Calu3 (cell line): ENCODE measurements at regions of chr10 and their contacts with region 1.

Region 1: DNA sequence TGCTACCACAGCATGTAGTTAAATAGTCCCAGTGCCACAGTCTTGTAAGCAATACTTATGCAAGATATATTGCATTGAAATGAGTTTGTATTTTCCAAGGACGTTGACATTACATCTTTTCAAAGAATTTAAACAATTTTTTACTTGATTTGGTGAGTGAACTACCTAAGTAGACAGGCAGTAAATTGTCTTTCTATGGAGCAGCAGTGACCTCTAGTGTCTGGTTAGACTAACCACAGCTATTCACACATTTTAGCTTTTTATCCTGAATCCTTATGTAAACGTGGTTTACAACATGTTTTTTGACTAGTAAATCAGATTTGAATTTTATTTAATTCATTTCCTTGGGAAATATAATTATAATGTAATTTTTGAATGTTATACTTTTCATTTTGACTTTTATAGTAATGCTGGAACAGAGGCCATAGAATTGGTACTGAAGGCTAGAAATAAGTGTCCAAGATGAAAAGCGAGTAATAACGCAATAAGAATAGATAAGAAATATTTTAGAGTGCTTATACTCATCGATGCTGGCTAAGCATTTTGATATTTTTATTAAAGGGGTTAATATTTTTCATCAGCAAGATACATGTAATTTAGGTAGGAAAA is 5.6 kb downstream of the LRRTM3 start:
- DNase-seq: peak; percentile 44
- H3K4me3 Mint-ChIP-seq: no peak overlapping the region
- H3K27ac Mint-ChIP-seq: no peak overlapping the region
- H3K4me1 Mint-ChIP-seq: no peaks in the 10 kb centered on the region
- H3K27me3 Mint-ChIP-seq: peaks cover 48% of the 10 kb centered on the region
- CTCF ChIP-seq: peak; percentile 74

Region 2: DNA sequence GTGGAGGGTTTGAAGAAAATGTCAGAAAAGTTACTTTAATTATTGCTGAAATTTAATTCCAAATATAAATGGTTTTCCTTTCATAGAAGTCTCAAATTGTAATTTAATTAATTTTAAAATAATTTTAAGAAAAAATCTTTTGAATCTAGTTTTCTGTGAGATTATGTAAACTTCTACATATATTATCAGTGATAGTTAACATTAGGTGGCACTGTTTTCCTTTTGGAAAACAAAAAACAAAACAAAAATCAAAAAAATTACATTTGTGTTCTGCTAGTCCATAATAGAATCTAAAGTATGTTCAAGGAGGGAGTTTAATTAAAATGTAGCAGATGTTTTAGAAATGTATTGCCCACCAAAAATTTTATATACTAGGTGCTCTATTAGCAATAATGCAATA is 1953.5 kb before region 1 on chr10:
- CTCF ChIA-PET with region 1: no interaction called
- intact Hi-C with region 1: loop called (anchors 5 kb)
- DNase-seq: no peak
- H3K4me3 Mint-ChIP-seq: no peak overlapping the region
- H3K27ac Mint-ChIP-seq: no peak overlapping the region
- H3K4me1 Mint-ChIP-seq: no peaks in the 10 kb centered on the region
- H3K27me3 Mint-ChIP-seq: no peaks in the 10 kb centered on the region
- CTCF ChIP-seq: no peak

Region 3: DNA sequence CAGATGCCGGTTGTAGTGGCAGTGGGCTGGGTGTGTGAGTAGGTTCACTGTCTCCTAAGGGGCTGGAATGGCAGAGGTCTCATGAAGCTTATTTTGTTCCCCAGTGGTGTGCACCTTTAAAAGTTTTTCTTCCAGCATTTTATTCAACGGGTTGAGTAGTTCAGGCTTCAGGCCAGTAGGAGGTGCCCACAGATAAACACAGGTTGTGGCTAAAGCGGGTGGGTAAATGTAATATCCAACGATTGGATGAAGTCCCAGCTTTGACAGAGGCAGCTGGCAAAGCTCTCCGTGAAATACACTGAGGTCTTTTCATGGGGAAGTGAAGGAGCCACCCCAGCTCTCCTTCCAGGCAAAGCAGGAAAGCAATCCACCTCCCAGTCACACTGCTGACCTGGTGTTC is 345.4 kb before region 1 on chr10:
- CTCF ChIA-PET with region 1: interaction called, 3 read pairs
- intact Hi-C with region 1: loop called (anchors 2 kb)
- DNase-seq: peak; percentile 36
- H3K4me3 Mint-ChIP-seq: no peak overlapping the region
- H3K27ac Mint-ChIP-seq: no peak overlapping the region
- H3K4me1 Mint-ChIP-seq: no peaks in the 10 kb centered on the region
- H3K27me3 Mint-ChIP-seq: no peaks in the 10 kb centered on the region
- CTCF ChIP-seq: no peak

Region 4: GRCh38 chr10:66852811-66853210 is 78.6 kb before region 1 on chr10:
- CTCF ChIA-PET with region 1: no interaction called
- intact Hi-C with region 1: no loop called
- DNase-seq: no peak
- H3K4me3 Mint-ChIP-seq: no peak overlapping the region
- H3K27ac Mint-ChIP-seq: no peak overlapping the region
- H3K4me1 Mint-ChIP-seq: no peaks in the 10 kb centered on the region
- H3K27me3 Mint-ChIP-seq: no peaks in the 10 kb centered on the region
- CTCF ChIP-seq: no peak

Region 5: GRCh38 chr10:66951896-66952295 is 20.5 kb after region 1 on chr10:
- CTCF ChIA-PET with region 1: no interaction called
- intact Hi-C with region 1: no loop called
- DNase-seq: no peak
- H3K4me3 Mint-ChIP-seq: no peak overlapping the region
- H3K27ac Mint-ChIP-seq: no peak overlapping the region
- H3K4me1 Mint-ChIP-seq: no peaks in the 10 kb centered on the region
- H3K27me3 Mint-ChIP-seq: no peaks in the 10 kb centered on the region
- CTCF ChIP-seq: no peak

Region 6: GRCh38 chr10:67127441-67127840 is 196.0 kb after region 1 on chr10:
- CTCF ChIA-PET with region 1: no interaction called
- intact Hi-C with region 1: no loop called
- DNase-seq: no peak
- H3K4me3 Mint-ChIP-seq: no peak overlapping the region
- H3K27ac Mint-ChIP-seq: no peak overlapping the region
- H3K4me1 Mint-ChIP-seq: no peaks in the 10 kb centered on the region
- H3K27me3 Mint-ChIP-seq: no peaks in the 10 kb centered on the region
- CTCF ChIP-seq: no peak

Region 7: DNA sequence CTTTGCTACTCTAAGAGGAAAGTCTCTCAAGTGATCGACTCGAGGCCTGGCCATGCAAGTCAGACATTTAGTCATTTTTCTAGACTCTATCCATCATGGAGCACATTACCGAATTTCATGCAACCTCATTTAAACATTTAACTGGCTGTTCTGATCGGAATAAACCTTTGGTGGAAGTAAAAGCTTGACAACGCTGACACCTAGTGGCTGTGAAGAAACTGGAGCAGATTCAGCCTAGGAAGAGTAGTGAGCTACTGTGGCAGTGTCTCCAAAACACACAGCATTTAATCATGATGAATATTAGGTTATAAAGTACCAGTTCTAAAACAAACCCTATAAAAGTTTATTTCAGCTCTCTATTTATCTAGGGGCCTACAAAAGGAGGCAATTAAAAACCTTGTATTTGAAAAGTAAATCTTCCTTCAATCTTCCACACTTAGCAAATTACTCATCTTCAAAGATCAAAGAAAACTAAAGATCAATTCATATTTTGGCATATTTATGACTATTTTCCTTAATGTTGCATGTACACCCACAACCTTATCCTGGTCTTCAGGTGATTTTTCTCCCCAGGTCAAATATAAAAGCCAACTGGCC is 589.6 kb after region 1 on chr10:
- CTCF ChIA-PET with region 1: interaction called, 6 read pairs
- intact Hi-C with region 1: loop called (anchors 5 kb)
- DNase-seq: peak; percentile 60
- H3K4me3 Mint-ChIP-seq: no peak overlapping the region
- H3K27ac Mint-ChIP-seq: no peak overlapping the region
- H3K4me1 Mint-ChIP-seq: no peaks in the 10 kb centered on the region
- H3K27me3 Mint-ChIP-seq: peaks cover 10% of the 10 kb centered on the region
- CTCF ChIP-seq: peak; percentile 79